H1 (cell line): ENCODE measurements at regions of chr10 and their contacts with region 1.

Region 1: DNA sequence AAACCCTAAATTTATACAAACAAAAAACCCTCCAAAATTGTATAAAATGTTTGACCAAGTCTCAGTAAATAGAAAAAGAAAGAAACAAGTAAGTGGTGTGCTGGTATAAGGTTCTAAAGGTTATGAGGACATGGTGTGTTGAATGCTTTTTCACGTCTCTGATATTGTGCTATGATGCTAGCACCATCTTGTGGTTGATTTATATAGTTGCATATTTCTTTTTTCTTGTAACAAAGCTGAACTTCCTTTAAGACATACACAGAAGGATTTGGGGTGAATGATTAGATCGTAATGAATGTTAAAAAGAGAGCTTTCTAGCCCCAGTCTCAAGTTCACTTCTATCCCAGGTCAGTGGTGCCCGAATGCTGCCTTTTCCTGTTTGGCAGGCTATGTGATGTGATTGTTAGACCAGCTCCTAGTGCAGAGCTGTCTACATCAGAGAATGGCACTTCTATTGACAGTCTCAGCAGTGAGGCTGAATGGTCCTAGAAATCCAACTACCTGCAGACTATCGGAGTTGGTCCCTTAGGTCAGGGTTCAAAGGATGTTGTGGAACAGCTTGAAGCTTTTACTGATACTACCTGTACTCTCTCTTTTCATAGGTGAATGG is 25.0 kb downstream of the VTI1A start:
- DNase-seq: peak in 1 of 2 experiments; percentile 55
- H3K4me3 ChIP-seq: no peak overlapping the region
- H3K27ac ChIP-seq: no peak overlapping the region
- H3K4me1 ChIP-seq: peaks cover 0 to 4% (median under 1%) of the 10 kb centered on the region in 4 experiments; a peak in 1 of 7 replicates
- H3K27me3 ChIP-seq: no peaks in the 10 kb centered on the region
- CTCF ChIP-seq: peak in 2 of 3 experiments; percentile 14 to 70; a peak in 2 of 4 replicates
- EP300 ChIP-seq: no peak
- POLR2A ChIP-seq: no peak
- RAD21 ChIP-seq: peak; percentile 69 to 76

Region 2: DNA sequence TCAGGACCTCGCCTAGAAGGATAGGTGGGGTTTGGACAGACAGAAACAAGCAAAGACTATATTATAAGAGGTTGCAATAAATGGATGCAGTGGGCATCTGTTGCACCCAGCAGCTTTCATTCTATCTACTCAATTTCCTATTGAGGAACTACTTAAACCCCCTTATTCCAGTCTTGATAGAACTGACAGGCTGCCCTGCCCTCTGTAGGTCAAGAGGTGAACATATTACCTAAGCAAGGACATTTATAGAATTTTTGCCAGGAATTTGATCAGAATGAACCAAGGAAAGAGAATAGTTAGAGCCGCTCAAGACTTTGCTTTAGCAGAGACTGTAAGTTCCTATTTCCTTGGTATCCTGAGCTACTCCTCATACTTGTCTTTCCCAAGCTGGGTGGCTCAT is 15.4 kb before region 1 on chr10:
- CTCF ChIA-PET with region 1: interaction called, 26 read pairs
- POLR2A ChIA-PET with region 1: no interaction called
- DNase-seq: no peak
- H3K4me3 ChIP-seq: no peak overlapping the region
- H3K27ac ChIP-seq: no peak overlapping the region
- H3K4me1 ChIP-seq: no peaks in the 10 kb centered on the region
- H3K27me3 ChIP-seq: no peaks in the 10 kb centered on the region
- CTCF ChIP-seq: peak in 1 of 3 experiments; percentile 35; a peak in 2 of 4 replicates
- EP300 ChIP-seq: no peak
- POLR2A ChIP-seq: no peak
- RAD21 ChIP-seq: peak; percentile 21 to 44; a peak in 3 of 4 replicates

Region 3: DNA sequence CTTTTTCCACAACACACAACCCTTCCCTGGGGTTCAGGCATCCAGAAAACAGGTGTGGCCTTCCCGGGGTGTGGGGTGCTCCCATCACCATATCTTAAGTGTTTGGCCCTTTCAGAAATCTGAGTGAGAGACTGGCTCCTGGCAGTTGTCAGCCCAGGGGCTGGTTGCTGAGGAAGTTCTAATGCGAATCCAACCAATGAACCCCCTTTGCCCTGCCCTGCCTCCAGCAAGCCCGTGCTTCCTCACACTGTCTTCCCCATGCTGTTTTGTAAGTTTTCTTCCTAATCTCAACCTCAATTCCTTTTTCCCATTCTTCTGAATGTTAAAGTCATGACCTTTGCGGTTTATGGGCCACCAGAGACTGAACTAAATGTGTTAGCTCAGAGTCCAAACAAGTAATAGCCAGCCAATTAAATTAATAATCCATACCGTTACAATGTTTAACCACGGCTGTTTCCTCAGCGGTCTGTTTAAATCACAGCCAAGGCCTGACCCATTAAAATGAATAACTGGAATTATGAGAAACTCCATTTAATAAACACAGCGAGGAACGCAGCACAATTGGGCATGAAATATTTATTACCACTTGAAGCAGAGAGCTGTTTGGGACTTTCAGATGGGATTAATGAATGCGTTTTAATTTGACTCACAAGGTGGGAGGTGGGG is 387.1 kb after region 1 on chr10:
- CTCF ChIA-PET with region 1: no interaction called
- POLR2A ChIA-PET with region 1: no interaction called
- DNase-seq: no peak
- H3K4me3 ChIP-seq: no peak overlapping the region
- H3K27ac ChIP-seq: no peak overlapping the region
- H3K4me1 ChIP-seq: no peaks in the 10 kb centered on the region
- H3K27me3 ChIP-seq: no peaks in the 10 kb centered on the region
- CTCF ChIP-seq: no peak
- EP300 ChIP-seq: no peak
- POLR2A ChIP-seq: no peak
- RAD21 ChIP-seq: no peak